HEK293T (cell line): ENCODE measurements at regions of chr9 and their contacts with region 1.

Region 1: DNA sequence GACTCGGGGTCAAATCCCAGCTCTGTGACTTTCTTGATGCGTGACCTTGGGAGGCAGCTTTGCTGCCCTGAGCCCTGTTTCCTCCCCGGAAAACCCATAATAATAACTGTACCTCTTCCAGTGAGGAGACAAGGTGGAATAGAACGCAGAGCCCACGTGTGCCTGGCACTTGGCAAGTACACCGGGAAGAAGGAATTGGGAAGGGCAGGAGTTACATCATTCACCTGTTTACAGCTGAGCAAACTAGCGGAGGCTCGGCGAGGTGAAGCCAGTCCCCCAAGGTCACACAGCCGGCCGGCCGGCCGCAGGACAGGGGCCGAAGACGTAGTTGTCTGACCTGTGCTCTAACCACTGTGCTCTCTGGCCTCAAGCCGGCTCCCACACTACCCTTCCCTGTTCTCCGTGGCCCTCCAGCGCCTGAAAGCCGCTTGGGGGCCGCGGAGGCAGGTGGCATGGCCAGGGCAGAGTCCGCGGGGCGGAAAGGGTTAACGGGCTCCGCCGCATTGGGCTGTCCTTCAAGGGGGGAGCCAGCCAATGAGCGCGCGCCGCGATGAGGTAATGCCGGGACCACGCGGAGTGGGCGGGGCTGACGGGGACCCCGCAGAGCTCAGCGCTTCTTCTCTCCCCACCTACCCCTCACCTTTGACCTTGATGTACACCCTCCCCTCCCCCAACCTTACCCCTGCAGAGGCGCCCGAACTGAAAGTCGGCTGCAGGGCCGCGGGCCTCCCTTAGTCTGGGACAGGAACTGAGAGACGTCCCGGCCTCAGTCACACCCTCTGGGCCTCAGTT is 125.2 kb downstream of the C9orf50 start:
- DNase-seq: peak; percentile 92

Region 2: DNA sequence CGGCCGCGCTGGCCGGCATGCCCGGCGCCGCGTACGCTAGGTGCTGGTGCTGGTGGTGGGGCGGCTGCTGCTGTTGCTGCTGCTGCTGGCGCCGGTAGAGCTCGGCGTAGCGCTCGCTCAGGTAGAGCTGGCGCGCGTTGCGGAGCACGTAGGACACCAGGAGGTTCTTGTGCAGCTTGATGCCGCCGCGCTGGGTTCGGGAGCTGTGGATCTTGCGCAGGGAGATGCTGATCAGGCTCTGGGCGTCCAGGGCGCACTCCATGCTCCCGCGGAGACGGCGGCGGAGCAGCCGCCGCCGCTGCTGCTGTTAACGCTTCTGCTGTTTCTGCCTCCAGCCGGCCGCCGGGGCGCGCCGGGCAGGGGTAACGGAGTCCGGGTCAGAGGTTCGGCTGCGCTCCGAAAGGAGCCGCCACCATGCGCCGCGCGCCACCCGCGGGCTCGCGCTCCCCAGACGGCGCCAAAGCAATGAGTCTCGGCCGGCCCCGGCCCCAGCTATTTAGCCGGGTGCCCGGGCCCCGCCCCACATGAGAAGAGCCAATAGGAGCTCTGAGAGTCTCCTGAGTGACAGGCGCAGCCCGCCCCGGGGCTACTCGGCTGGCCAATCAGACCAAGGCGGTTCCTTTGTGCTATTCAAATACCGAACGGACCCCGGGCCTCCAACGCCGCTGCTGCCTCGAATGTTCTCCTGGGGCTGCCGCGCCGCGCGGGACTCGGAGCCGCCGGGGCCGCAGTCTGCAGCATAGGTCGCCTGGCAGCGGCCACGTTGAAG is 317.8 kb before region 1 on chr9 and contains the start of gene IER5L:
- CTCF ChIA-PET with region 1: interaction called, 3 read pairs
- POLR2A ChIA-PET with region 1: interaction called, 13 read pairs
- DNase-seq: peak; percentile 97

Region 3: DNA sequence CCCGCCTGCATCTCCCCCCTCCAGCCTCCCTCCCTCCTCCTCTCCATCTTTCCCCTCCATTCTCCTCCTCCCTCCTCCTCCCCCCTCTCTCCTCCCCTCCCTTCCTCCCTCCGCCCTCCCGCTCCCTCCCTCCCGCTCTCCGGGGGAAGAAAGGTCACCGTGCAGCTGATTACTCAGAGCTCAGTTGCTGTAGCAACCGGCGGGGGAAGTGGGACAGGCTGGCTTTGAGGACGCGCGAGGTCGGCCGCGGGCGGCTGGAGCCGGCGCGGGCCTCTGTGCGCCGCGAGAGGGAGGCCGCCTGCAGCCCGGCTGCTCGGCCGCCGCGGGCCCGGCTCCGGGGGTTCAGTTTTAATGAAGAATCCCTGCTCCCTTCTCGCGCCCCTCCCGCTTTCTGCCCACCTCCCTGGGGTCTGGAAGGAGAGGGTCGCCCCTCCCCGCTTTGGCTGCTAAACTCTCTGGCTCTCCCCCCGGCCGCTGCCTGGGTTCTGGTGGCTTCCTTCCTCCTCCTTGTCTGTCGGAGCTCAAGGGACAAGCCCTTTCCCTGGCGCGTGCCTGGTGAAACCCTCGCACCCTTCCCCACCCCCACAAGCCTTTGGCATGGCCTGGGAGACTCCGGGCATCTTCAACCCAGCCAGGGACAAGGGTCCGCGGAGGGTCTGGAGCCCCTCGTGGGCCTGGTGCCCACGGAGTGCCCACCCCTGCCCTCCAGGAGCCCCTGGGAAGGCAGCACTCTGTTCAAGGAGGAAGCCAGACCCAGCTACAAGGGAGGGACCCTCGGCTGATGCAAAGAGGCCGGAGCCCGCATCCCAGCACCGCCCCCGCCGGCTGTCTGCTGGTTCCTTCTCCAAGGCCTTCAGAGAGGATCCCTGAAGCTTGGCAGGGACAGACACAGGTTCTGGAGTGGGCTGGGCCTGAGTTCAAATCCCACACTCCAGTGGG is 35.1 kb before region 1 on chr9:
- CTCF ChIA-PET with region 1: no interaction called
- POLR2A ChIA-PET with region 1: interaction called, 16 read pairs
- DNase-seq: peak; percentile 88

Region 4: GRCh38 chr9:129482521-129483414 is 13.0 kb before region 1 on chr9:
- CTCF ChIA-PET with region 1: interaction called, 3 read pairs
- POLR2A ChIA-PET with region 1: interaction called, 35 read pairs
- DNase-seq: peak; percentile 69

Region 5: DNA sequence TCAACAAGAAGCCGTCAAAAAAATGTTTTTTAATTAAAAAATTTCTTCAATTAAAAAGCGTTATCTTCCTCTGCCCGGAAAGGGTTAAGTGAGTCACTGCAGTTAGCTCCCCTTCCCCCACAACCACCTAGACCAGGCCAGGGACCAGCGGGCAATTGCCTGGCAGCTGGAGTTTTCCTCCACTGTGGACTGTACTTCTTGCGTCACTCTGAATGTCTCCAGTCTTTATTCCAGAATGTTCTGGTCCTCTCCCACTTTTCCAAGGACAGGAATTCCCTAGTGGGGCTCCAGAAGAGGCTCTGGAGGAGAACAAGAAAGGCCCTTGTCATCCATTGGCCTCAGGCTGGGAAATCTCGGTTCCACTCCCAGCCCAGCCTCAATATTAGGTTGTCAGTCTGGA is 11.2 kb after region 1 on chr9:
- CTCF ChIA-PET with region 1: no interaction called
- POLR2A ChIA-PET with region 1: interaction called, 15 read pairs
- DNase-seq: no peak

Region 6: GRCh38 chr9:129544761-129545160 is 49.0 kb after region 1 on chr9:
- CTCF ChIA-PET with region 1: no interaction called
- POLR2A ChIA-PET with region 1: no interaction called
- DNase-seq: no peak